ENCODE measurements at regions of chr2 and their contacts with region 1.

Region 1: DNA sequence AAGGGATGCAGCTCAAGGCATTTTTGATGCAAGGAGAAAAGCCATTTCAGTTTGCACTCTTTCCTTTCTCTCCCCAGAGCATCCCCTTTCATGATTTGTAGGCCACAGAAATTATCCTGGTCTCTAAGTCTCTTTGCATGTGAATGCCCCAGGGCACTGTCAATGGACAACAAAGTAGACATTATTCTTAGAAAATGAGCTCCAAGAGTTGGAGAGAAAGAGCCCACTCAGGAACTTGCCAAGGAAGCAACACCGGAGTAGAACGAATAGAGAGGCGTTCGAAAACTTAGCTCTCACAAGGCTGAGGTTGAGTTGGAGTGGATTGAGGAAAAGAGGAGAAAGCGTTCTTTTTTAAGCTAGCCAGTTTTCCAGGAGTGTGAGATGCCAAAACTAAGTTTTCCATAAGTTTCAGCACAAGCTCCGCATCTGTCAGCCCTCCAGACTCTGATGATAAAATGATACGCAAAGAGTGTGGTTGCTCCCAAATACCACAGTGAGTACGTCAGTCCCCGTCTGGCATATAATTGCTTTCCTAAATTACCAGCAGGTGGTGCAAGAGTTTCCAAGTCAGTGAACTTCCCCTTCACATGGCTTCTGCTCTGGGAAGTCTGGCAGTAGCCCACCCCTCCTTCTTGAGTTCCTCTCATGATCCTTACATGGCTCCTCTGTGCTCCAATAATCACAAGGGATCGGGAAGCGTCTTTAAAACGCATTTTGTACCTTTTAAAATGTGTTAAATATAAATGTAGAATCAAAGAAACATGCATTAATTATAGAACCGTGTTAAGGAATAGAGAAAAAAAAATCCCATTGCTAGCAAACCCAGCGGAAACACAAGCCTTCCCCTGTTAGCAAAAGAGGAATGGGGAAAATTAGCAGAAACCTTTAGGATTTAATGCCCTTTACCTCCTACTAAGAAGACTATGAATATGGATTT is 1060.6 kb upstream of the FANCL start:
- DNase-seq: peak; percentile 39
- ATAC-seq: peak; percentile 97
- H3K4me3 Mint-ChIP-seq: no peak overlapping the region
- H3K27ac Mint-ChIP-seq: no peak overlapping the region
- H3K4me1 Mint-ChIP-seq: peaks cover 14% of the 10 kb centered on the region
- H3K27me3 Mint-ChIP-seq: no peaks in the 10 kb centered on the region
- CTCF ChIP-seq: peak; percentile 27; the same call in 1 of the 2 replicates

Region 2: GRCh38 chr2:59584958-59585357 is 283.2 kb after region 1 on chr2:
- CTCF ChIA-PET with region 1: interaction called, 18 read pairs
- POLR2A ChIA-PET with region 1: no interaction called
- DNase-seq: peak; percentile 69
- ATAC-seq: peak; percentile 98
- H3K4me3 Mint-ChIP-seq: no peak overlapping the region
- H3K27ac Mint-ChIP-seq: no peak overlapping the region
- H3K4me1 Mint-ChIP-seq: peaks cover 3% of the 10 kb centered on the region
- H3K27me3 Mint-ChIP-seq: no peaks in the 10 kb centered on the region
- CTCF ChIP-seq: peak; percentile 38; the same call in 1 of the 2 replicates